ENCODE measurements at regions of chr3 and their contacts with region 1.

Region 1: DNA sequence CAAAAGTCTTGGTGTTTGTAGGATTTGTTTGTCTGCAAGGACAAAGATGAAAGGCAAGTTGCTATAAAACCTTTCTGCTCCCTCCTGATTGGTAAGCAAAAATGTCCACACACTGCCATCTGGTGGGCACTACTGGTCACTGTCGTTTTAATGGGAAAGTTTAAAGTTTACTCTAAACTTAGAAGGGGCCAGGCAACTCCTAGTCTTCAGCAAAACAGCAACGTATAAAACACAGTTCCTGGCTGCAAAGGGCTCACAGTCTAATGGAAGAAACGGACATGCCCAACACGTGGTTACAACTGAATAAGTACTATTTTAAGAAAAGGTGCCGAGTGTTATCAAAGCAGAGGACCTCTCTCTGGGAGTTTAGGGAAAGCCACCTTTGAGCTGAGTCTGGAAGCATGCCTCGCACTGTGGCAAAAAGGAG is 23.7 kb upstream of the TPRG1 start:
- DNase-seq: peak; percentile 44 to 82 (median 71)
- ATAC-seq: peak; percentile 74
- H3K4me3 ChIP-seq: no peak overlapping the region
- H3K4me3 Mint-ChIP-seq: no peak overlapping the region
- H3K27ac ChIP-seq: no peak overlapping the region
- H3K27ac Mint-ChIP-seq: no peak overlapping the region
- H3K4me1 ChIP-seq: peaks cover 14% of the 10 kb centered on the region
- H3K4me1 Mint-ChIP-seq: peaks cover 17% of the 10 kb centered on the region
- H3K27me3 ChIP-seq: no peaks in the 10 kb centered on the region
- H3K27me3 Mint-ChIP-seq: no peaks in the 10 kb centered on the region
- CTCF ChIP-seq: peak; percentile 74

Region 2: DNA sequence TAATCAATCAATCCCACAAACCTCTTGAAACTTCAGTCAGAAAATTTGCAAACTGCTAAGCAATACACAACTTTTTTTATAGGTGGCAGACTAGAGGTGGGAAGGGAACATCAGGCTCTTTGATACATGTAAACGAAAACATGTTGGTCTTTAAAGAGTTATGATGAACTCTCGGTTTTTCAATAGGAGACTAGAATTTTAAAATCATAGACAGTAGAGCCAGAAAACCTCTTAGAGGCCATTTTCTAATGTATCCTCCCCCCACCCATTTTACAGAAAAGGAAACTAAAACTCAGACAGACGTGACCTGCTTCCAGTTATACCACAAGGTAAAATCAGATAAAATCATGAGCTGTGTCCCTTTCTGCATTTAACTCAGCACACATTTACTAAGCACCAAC is 1173.2 kb before region 1 on chr3:
- CTCF ChIA-PET with region 1: no interaction called
- POLR2A ChIA-PET with region 1: no interaction called
- intact Hi-C with region 1: loop called in 1 of 2 experiments (anchors 10 kb)
- DNase-seq: peak in 2 of 9 experiments; percentile 51 to 63
- ATAC-seq: peak; percentile 65
- H3K4me3 ChIP-seq: peak overlapping the region; percentile 8 to 13
- H3K4me3 Mint-ChIP-seq: peak overlapping the region; percentile 68
- H3K27ac ChIP-seq: peak overlapping the region in 1 of 2 experiments; percentile 56
- H3K27ac Mint-ChIP-seq: peak overlapping the region; percentile 79
- H3K4me1 ChIP-seq: peaks cover 34% of the 10 kb centered on the region
- H3K4me1 Mint-ChIP-seq: peaks cover 51% of the 10 kb centered on the region
- H3K27me3 ChIP-seq: no peaks in the 10 kb centered on the region
- H3K27me3 Mint-ChIP-seq: no peaks in the 10 kb centered on the region
- CTCF ChIP-seq: peak; percentile 58

Region 3: DNA sequence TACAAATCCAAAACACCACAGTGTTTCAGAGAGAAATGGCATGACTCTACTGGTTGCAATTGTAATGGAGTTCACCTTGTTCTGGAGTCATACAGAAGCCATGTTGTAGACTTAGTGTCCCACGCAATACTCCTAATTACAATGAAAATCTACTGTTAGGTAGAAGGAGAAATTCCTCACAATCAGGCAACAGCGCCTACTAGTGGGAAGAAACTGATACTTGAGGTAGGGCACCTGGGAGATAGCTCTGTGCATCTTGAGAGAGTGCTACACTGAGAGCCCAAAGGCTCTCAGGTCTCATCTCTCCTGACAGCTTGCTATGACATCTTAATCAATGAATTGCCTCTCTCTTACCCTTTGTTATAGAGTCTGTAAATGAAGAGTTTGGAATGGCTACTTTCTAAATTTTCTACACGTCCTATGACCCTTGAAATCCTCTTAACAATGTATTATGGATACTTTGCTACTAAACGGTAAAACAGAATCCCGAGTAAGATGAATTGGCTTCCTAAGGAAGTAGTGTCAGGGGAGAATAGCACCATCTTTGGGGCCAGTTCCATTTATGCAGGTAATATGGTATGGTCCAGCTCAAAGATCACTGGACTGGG is 399.0 kb before region 1 on chr3:
- CTCF ChIA-PET with region 1: interaction called, 16 read pairs
- POLR2A ChIA-PET with region 1: no interaction called
- intact Hi-C with region 1: loop called (anchors 2 kb)
- DNase-seq: peak; percentile 26 to 77 (median 59)
- ATAC-seq: peak; percentile 73
- H3K4me3 ChIP-seq: no peak overlapping the region
- H3K4me3 Mint-ChIP-seq: no peak overlapping the region
- H3K27ac ChIP-seq: no peak overlapping the region
- H3K27ac Mint-ChIP-seq: no peak overlapping the region
- H3K4me1 ChIP-seq: no peaks in the 10 kb centered on the region
- H3K4me1 Mint-ChIP-seq: peaks cover 2% of the 10 kb centered on the region
- H3K27me3 ChIP-seq: no peaks in the 10 kb centered on the region
- H3K27me3 Mint-ChIP-seq: no peaks in the 10 kb centered on the region
- CTCF ChIP-seq: peak; percentile 76

Region 4: DNA sequence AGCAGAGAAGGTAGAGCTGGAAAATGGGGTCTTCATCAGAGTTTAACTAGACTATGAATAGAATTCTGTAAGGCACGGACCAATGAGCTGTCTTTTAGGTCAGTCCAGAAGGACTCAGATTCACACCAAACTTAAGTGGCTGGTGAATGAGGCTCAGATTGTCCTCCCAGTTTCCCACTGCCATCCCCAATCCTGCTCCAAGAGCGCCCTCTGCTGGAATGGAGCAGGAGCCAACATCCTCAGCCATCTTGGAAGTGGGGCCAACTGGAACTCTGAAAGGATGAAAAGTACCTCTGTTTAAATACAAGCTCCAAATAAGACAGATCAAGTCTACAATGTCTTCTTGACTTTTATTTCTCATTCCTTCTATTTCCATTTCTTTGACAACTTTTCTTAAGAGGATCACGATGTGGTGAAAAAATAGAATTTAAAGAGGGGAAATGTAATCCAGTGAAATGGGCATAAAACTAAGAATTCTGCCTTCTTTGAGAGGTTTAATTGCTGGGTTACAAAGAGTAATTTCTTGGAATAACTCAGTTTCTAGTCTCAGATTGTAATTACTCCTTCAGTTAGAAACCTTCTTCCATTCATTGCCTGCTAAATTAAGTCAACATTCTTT is 193.4 kb before region 1 on chr3:
- CTCF ChIA-PET with region 1: interaction called, 33 read pairs
- POLR2A ChIA-PET with region 1: no interaction called
- intact Hi-C with region 1: loop called (anchors 1 to 2 kb)
- DNase-seq: peak; percentile 47 to 84 (median 71)
- ATAC-seq: peak; percentile 57
- H3K4me3 ChIP-seq: no peak overlapping the region
- H3K4me3 Mint-ChIP-seq: no peak overlapping the region
- H3K27ac ChIP-seq: no peak overlapping the region
- H3K27ac Mint-ChIP-seq: no peak overlapping the region
- H3K4me1 ChIP-seq: no peaks in the 10 kb centered on the region
- H3K4me1 Mint-ChIP-seq: peaks cover 5% of the 10 kb centered on the region
- H3K27me3 ChIP-seq: no peaks in the 10 kb centered on the region
- H3K27me3 Mint-ChIP-seq: no peaks in the 10 kb centered on the region
- CTCF ChIP-seq: peak; percentile 64

Region 5: GRCh38 chr3:189123595-189124387 is 24.3 kb before region 1 on chr3:
- CTCF ChIA-PET with region 1: interaction called, 13 read pairs
- POLR2A ChIA-PET with region 1: no interaction called
- intact Hi-C with region 1: no loop called
- DNase-seq: no peak
- ATAC-seq: no peak
- H3K4me3 ChIP-seq: peak overlapping the region in 1 of 2 experiments; percentile 49
- H3K4me3 Mint-ChIP-seq: peak overlapping the region; percentile 77
- H3K27ac ChIP-seq: peak overlapping the region in 1 of 2 experiments; percentile 86
- H3K27ac Mint-ChIP-seq: peak overlapping the region; percentile 47
- H3K4me1 ChIP-seq: peaks cover 7% of the 10 kb centered on the region
- H3K4me1 Mint-ChIP-seq: peaks cover 33% of the 10 kb centered on the region
- H3K27me3 ChIP-seq: no peaks in the 10 kb centered on the region
- H3K27me3 Mint-ChIP-seq: no peaks in the 10 kb centered on the region
- CTCF ChIP-seq: no peak

Region 6: GRCh38 chr3:189276481-189277219 is 128.6 kb after region 1 on chr3:
- CTCF ChIA-PET with region 1: no interaction called
- POLR2A ChIA-PET with region 1: no interaction called
- intact Hi-C with region 1: no loop called
- DNase-seq: no peak
- ATAC-seq: no peak
- H3K4me3 ChIP-seq: no peak overlapping the region
- H3K4me3 Mint-ChIP-seq: no peak overlapping the region
- H3K27ac ChIP-seq: no peak overlapping the region
- H3K27ac Mint-ChIP-seq: no peak overlapping the region
- H3K4me1 ChIP-seq: peaks cover 7% of the 10 kb centered on the region
- H3K4me1 Mint-ChIP-seq: peaks cover 33% of the 10 kb centered on the region
- H3K27me3 ChIP-seq: no peaks in the 10 kb centered on the region
- H3K27me3 Mint-ChIP-seq: no peaks in the 10 kb centered on the region
- CTCF ChIP-seq: no peak

Region 7: DNA sequence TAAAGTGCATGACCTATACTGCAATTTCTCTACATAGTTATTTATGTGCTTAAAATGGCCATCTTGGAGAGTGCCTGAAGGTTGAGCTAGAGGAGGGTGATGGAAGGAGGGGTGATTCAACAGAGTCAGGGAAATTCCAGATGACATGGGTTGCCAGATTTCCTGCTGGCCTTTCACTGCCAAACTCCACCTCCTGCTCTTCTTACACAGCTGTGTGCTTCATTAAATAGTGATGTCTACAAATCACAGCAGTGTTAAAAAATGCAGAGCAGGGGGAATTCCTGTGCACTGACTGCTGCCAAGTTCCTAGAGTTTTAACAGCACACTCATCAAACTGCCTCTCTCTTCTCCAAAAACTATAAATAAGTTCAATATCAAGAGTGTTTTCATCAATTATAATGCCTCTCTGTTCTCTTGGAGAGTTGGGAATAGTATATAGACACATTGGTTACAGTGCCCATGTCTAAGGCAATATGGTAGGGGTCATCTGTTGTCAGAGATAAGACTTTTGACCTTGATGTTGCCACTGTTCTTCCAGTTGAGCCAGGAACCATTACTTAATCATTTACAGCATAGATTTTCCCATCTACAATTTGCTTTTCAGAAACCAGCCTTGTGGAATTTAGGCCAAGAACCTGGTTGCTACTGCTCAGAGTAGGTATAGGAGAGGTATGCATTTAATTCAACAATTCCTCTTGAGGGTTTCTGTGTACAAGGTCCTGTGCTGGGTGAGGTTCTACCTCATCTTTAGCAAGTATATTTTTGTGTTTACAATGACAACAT is 562.7 kb after region 1 on chr3:
- CTCF ChIA-PET with region 1: no interaction called
- POLR2A ChIA-PET with region 1: no interaction called
- intact Hi-C with region 1: no loop called
- DNase-seq: peak in 1 of 9 experiments; percentile 12
- ATAC-seq: no peak
- H3K4me3 ChIP-seq: no peak overlapping the region
- H3K4me3 Mint-ChIP-seq: no peak overlapping the region
- H3K27ac ChIP-seq: no peak overlapping the region
- H3K27ac Mint-ChIP-seq: no peak overlapping the region
- H3K4me1 ChIP-seq: no peaks in the 10 kb centered on the region
- H3K4me1 Mint-ChIP-seq: peaks cover 7% of the 10 kb centered on the region
- H3K27me3 ChIP-seq: no peaks in the 10 kb centered on the region
- H3K27me3 Mint-ChIP-seq: no peaks in the 10 kb centered on the region
- CTCF ChIP-seq: no peak